A549 (cell line): ENCODE measurements at regions of chr19 and their contacts with region 1.

Region 1: DNA sequence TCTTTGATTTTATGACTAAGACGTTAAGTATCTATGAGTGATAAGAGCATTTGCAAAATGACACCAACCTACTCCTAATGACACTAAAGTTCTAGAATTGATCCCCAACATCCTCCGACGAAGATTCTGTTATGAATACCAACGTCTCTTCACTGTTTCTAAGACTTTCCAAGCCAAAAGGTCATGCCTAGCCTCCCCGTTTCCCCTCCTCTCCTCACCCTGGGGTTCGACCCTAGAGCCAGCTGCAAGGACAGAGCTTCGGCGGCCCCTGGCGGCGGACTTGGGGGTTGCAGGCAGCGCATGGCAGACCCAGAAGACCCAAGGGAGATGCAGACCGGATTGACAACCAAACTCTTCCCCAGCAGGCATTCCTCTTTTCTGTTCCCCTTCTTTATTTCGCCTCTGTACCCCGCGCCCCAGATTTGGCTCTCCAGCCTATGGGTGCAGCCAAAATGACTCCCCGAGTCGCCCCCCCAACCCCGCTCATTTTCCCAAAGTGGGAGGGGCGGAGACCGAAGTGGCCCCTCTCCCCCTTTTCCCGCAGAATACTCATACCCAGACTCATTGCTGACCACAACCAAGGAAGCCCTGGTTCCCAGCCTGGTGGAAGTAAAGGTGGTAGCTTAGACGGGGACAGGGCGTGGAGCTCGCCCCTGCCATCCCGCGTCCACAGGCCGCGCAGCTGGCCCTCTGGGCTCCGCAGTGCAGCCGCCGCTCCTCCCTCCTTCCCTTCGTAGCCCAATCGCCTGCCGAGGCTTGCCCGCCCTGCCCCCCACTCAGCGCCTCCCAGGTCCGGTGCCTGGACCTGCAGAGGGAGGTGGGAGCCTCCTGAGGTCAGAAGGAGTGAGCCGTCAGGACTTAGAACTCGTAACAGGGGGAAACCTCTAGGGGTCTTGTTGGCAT is 4.1 kb upstream of the EML2 start:
- DNase-seq: peak; percentile 91 to 95
- ATAC-seq: peak in 1 of 2 experiments; percentile 16; a peak in 3 of 6 replicates
- H3K4me3 ChIP-seq: peak overlapping the region; percentile 51; the same call in 2 of the 3 replicates
- H3K27ac ChIP-seq: peak overlapping the region; percentile 88 to 90
- H3K4me1 ChIP-seq: peaks cover 44% of the 10 kb centered on the region
- CTCF ChIP-seq: peak; percentile 99
- EP300 ChIP-seq: no peak
- POLR2A ChIP-seq: no peak
- RAD21 ChIP-seq: peak; percentile 99 to 100

Region 2: DNA sequence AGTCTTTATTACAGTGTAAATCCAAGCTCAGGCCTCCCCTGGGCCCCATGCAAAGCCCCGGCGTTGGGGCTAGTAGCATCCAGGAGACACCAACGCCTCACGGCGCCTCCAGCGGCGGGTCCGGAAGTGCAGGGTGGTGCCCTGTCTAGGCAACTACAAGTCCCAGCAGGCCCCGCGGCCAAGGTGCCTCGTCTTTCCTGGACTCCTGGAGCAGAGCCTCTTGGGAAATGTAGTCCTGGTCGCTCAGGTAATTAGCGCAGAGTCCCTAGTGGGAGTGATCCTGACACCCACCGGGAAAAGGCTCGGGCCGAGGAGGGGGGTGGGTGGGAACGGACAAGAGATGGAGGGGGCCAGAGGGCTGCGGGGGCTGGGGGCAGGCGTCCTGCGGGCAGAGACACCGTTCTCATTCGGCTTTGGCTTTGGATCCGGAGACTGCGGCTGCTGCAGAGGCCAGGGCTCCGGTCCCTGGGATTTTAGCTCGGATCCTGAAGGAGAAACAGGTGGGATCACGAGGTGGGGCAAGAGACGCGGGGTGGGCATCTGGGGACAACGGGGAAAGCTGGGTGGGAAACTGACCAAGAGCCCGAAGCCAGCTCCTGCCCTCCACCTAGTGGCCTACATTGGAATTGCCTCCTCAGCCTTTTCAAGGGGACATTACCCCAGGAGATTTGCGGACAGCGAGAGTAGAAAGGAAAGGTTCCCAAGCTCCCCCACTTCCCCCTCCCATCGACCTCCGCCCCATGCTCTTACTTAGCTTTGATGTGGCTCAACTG is 157.8 kb before region 1 on chr19:
- CTCF ChIA-PET with region 1: interaction called, 65 read pairs
- POLR2A ChIA-PET with region 1: interaction called, 7 read pairs
- DNase-seq: peak; percentile 94 to 97
- ATAC-seq: peak; percentile 92 to 97
- H3K4me3 ChIP-seq: peak overlapping the region; percentile 63
- H3K27ac ChIP-seq: peak overlapping the region; percentile 76 to 92
- H3K4me1 ChIP-seq: peaks cover 5% of the 10 kb centered on the region
- CTCF ChIP-seq: peak; percentile 63
- EP300 ChIP-seq: no peak
- POLR2A ChIP-seq: no peak
- RAD21 ChIP-seq: peak; percentile 65 to 71

Region 3: DNA sequence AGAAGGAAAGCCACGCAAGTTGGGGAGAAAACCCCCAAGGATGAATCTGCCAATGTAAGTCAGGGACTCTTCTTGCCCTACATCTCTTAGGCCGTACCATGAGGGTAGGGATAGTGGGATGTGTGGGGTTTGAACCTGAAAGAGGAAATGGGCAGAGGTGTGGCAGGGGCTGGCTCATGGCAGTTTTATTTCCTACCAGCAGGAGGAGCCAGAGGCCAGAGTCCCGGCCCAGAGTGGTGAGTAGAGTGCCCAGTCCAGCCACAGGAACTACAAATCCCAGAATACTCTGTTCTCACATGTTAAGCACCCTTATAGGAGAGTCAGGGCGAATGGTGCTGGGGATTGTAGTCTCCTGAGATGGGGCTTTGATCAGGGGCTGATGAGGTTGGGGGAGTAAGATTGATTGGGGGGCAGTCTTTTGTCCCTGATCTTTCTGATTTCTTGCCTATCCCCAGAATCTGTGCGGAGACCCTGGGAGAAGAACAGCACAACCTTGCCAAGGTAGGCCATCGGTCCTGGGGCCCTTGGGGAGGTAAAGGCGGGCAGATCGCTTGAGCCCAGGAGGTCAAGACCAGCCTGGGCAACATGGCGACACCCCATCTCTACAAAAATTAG is 119.5 kb before region 1 on chr19:
- CTCF ChIA-PET with region 1: interaction called, 71 read pairs
- POLR2A ChIA-PET with region 1: interaction called, 3 read pairs
- DNase-seq: peak; percentile 94
- ATAC-seq: peak; percentile 92 to 93
- H3K4me3 ChIP-seq: no peak overlapping the region
- H3K27ac ChIP-seq: peak overlapping the region in 1 of 2 experiments; percentile 47; a peak in 1 of 6 replicates
- H3K4me1 ChIP-seq: peaks cover 20% of the 10 kb centered on the region
- CTCF ChIP-seq: peak; percentile 97
- EP300 ChIP-seq: no peak
- POLR2A ChIP-seq: no peak
- RAD21 ChIP-seq: peak; percentile 97 to 98

Region 4: DNA sequence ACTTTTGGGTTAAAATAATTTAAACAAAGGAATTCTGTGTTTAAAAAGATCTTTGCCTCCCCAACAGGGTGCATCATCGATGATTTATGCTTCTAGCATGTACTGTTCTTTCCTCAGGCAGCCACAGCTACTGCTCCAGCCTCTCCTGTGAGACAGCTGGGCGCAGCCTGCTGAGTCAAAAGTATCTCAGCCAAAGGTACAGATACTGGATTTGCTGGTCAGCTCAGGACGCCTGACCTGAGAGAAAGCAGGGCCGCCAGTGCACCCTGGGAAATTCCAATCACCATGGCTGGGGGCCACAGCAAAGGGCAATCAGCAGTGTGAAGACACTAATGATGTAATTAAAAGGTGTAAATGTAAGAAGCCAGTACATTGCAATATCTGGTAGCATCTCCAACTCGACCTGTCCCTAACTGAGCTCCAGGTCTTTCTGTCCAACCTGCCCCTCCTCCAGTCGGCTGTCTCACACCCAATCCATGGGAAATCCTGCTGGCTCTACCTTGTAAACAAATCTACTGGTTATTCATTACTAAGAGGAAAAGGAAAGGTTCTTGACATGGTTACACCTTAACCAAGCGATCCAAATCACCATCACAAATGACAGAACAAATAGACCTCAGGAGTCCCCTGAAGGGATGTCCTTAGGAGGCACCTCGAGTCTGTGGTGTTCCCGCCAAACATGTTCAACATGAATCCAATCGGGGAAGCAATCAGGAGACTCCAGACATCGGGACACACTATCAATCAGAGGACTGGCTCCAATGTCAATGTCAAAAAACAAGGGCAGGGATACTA is 66.0 kb before region 1 on chr19:
- CTCF ChIA-PET with region 1: interaction called, 91 read pairs
- POLR2A ChIA-PET with region 1: interaction called, 10 read pairs
- DNase-seq: peak; percentile 82 to 91
- ATAC-seq: peak; percentile 95 to 97
- H3K4me3 ChIP-seq: 0 out of 3 replicates have a peak overlapping the region, but pooled peaks have one; percentile 2
- H3K27ac ChIP-seq: peak overlapping the region; percentile 79 to 85
- H3K4me1 ChIP-seq: peaks cover 52% of the 10 kb centered on the region
- CTCF ChIP-seq: no peak
- EP300 ChIP-seq: peak in 1 of 2 experiments; percentile 38; a peak in 1 of 5 replicates
- POLR2A ChIP-seq: no peak
- RAD21 ChIP-seq: peak in 1 of 2 experiments; percentile 36; a peak in 1 of 5 replicates

Region 5: GRCh38 chr19:45607071-45608029 is 35.9 kb before region 1 on chr19:
- CTCF ChIA-PET with region 1: interaction called, 437 read pairs
- POLR2A ChIA-PET with region 1: interaction called, 15 read pairs
- DNase-seq: peak; percentile 77 to 81
- ATAC-seq: peak; percentile 82 to 86
- H3K4me3 ChIP-seq: peak overlapping the region; percentile 28; the same call in 2 of the 3 replicates
- H3K27ac ChIP-seq: peak overlapping the region; percentile 65 to 84
- H3K4me1 ChIP-seq: peaks cover 8% of the 10 kb centered on the region
- CTCF ChIP-seq: peak; percentile 91
- EP300 ChIP-seq: no peak
- POLR2A ChIP-seq: no peak
- RAD21 ChIP-seq: peak; percentile 80 to 84

Region 6: DNA sequence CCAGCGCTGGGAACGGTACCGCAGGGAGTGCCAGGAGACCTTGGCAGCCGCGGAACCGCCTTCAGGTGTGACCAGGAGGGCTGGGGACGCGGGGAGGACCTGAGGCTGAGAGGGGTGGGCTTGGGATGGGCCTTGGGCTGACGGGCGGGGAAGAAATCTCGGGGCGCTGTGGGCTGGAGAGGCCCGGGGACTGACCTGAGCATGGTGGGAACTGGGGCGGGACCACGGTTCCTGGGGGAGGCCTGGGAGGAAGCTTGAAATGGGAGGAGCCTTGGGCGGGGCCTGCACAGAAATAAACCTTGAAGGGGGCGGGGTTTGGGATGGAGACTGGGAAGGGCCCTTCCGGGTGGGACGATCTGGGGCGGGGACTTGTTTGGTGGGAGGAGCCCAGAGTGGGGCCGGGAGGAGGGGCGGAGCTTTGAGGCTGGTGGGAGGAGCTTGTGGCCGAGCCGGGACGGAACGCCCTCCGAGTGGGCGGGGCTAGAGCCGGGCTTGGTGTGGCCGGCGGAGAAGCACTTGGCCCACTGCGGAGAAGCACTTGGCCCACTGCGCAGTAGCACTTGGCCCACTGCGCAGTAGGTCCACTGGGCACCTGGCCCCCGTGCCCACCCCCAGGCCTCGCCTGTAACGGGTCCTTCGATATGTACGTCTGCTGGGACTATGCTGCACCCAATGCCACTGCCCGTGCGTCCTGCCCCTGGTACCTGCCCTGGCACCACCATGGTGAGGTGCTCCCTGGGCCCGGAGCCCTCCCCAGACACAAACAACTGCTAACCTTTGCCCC is 27.6 kb after region 1 on chr19:
- CTCF ChIA-PET with region 1: interaction called, 40 read pairs
- POLR2A ChIA-PET with region 1: interaction called, 5 read pairs
- DNase-seq: peak; percentile 97
- ATAC-seq: peak; percentile 33 to 72
- H3K4me3 ChIP-seq: peak overlapping the region; percentile 39
- H3K27ac ChIP-seq: peak overlapping the region; percentile 60 to 76
- H3K4me1 ChIP-seq: peaks cover 27% of the 10 kb centered on the region
- CTCF ChIP-seq: no peak
- EP300 ChIP-seq: no peak
- POLR2A ChIP-seq: no peak
- RAD21 ChIP-seq: no peak

Region 7: GRCh38 chr19:45742969-45743368 is 99.7 kb after region 1 on chr19:
- CTCF ChIA-PET with region 1: no interaction called
- POLR2A ChIA-PET with region 1: no interaction called
- DNase-seq: no peak
- ATAC-seq: peak; percentile 20 to 38; a peak in 3 of 6 replicates
- H3K4me3 ChIP-seq: no peak overlapping the region
- H3K27ac ChIP-seq: no peak overlapping the region
- H3K4me1 ChIP-seq: no peaks in the 10 kb centered on the region
- CTCF ChIP-seq: no peak
- EP300 ChIP-seq: no peak
- POLR2A ChIP-seq: no peak
- RAD21 ChIP-seq: no peak